ENCODE measurements at regions of chr12 and their contacts with region 1.

Region 1: GRCh38 chr12:117111821-117112595 is 12.8 kb upstream of the TESC start:
- DNase-seq: no peak
- ATAC-seq: peak; percentile 37; the same call in 1 of the 2 replicates
- H3K4me3 ChIP-seq: no peak overlapping the region
- H3K27ac ChIP-seq: no peak overlapping the region
- H3K4me1 ChIP-seq: no peaks in the 10 kb centered on the region
- H3K27me3 ChIP-seq: peaks cover 22% of the 10 kb centered on the region; the same call in 1 of the 2 replicates
- CTCF ChIP-seq: no peak
- POLR2A ChIP-seq: no peak
- RAD21 ChIP-seq: no peak

Region 2: GRCh38 chr12:116497051-116497591 is 614.9 kb before region 1 on chr12:
- CTCF ChIA-PET with region 1: no interaction called
- POLR2A ChIA-PET with region 1: no interaction called
- dilution Hi-C with region 1: no loop called
- in situ Hi-C with region 1: no loop called
- intact Hi-C with region 1: no loop called
- DNase-seq: no peak
- ATAC-seq: no peak
- H3K4me3 ChIP-seq: no peak overlapping the region
- H3K27ac ChIP-seq: no peak overlapping the region
- H3K4me1 ChIP-seq: no peaks in the 10 kb centered on the region
- H3K27me3 ChIP-seq: no peaks in the 10 kb centered on the region
- CTCF ChIP-seq: no peak
- POLR2A ChIP-seq: no peak
- RAD21 ChIP-seq: no peak

Region 3: GRCh38 chr12:117142094-117142493 is 30.1 kb after region 1 on chr12:
- CTCF ChIA-PET with region 1: no interaction called
- POLR2A ChIA-PET with region 1: interaction called, 12 read pairs
- dilution Hi-C with region 1: no loop called
- in situ Hi-C with region 1: no loop called
- intact Hi-C with region 1: no loop called
- DNase-seq: no peak
- ATAC-seq: no peak
- H3K4me3 ChIP-seq: no peak overlapping the region
- H3K27ac ChIP-seq: no peak overlapping the region
- H3K4me1 ChIP-seq: no peaks in the 10 kb centered on the region
- H3K27me3 ChIP-seq: no peaks in the 10 kb centered on the region
- CTCF ChIP-seq: no peak
- POLR2A ChIP-seq: no peak
- RAD21 ChIP-seq: no peak

Region 4: GRCh38 chr12:117333331-117333881 is 221.4 kb after region 1 on chr12:
- CTCF ChIA-PET with region 1: no interaction called
- POLR2A ChIA-PET with region 1: no interaction called
- dilution Hi-C with region 1: no loop called
- in situ Hi-C with region 1: no loop called
- intact Hi-C with region 1: no loop called
- DNase-seq: no peak
- ATAC-seq: no peak
- H3K4me3 ChIP-seq: no peak overlapping the region
- H3K27ac ChIP-seq: no peak overlapping the region
- H3K4me1 ChIP-seq: no peaks in the 10 kb centered on the region
- H3K27me3 ChIP-seq: no peaks in the 10 kb centered on the region
- CTCF ChIP-seq: no peak
- POLR2A ChIP-seq: no peak
- RAD21 ChIP-seq: no peak

Measured in IMR-90 (cell line).